ENCODE measurements at regions of chr17 and their contacts with region 1.

Region 1: DNA sequence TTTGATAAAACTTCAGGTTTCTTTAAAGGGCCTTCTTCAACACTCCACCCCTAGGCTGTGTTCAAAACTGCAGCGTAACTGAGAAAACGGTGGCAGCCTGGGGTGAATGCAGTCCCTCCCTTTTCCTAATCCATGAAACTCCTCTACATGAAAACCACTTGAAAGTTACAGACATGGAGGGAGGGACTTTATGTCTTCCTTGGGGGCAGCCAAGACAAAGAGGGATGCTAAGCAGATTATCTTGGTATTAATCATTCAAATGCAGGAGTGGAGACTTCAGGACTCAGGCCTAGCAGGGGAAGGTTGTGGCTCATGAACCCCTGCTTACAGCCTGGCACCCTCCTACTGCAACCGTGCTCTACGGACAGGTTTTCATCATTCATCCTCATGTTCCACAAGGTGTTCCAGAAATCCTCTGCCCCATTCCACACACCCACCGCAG is 46.8 kb downstream of the RNF112 start:
- DNase-seq: peak in 1 of 2 experiments; percentile 49
- H3K4me3 ChIP-seq: peak overlapping the region in 1 of 4 experiments; percentile 23; a peak in 2 of 8 replicates
- H3K27ac ChIP-seq: peak overlapping the region; percentile 30; the same call in 1 of the 2 replicates
- H3K4me1 ChIP-seq: peaks cover 19 to 43% (median 40%) of the 10 kb centered on the region in 4 experiments
- H3K27me3 ChIP-seq: no peaks in the 10 kb centered on the region
- CTCF ChIP-seq: peak in 1 of 3 experiments; percentile 2; a peak in 1 of 4 replicates
- EP300 ChIP-seq: no peak
- POLR2A ChIP-seq: no peak
- RAD21 ChIP-seq: 0 out of 4 replicates have a peak, but pooled peaks of 1 of the 2 experiments have one; percentile 8

Region 2: DNA sequence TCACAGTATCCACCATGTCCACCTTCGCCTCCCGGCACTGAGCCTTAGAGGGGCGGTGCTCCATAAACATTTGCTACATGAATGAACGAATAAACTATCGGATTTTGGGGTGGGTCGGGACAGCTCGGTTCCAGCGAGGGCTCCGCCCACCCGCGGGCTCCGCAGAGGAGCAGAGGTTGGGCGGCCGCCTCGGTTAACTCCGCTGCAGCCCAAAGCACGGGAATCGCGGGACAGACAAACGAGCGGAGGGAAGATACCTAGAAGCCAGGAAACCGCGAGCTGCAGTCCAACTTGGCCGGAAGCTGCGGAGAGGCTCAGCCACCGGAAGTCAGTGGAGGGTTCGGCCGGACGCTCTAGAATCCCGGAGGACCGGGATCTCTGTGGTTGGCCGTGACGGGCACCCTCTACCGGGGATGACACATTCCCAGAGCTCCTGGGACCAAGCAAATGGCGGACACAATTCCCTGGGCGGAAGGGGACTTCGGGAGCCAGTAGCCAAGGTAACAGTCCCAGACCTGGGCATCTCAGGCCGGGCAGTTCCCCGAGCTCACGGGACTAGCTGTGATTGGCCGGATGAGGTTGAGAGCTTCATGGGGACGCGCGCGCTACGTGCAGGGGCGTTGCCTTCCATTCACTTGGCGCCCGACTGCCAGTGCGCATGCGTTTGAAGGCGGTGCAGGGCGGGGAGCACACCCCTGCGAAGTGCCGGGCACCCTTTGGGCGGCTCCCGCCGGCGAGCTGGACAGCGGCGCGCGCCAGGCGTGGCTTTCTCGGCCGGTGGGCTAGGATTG is 80.1 kb before region 1 on chr17:
- CTCF ChIA-PET with region 1: interaction called, 7 read pairs
- POLR2A ChIA-PET with region 1: interaction called, 11 read pairs
- DNase-seq: peak; percentile 94 to 97
- H3K4me3 ChIP-seq: peak overlapping the region; percentile 59 to 90 (median 82)
- H3K27ac ChIP-seq: peak overlapping the region; percentile 79
- H3K4me1 ChIP-seq: peaks cover 3 to 11% (median 5%) of the 10 kb centered on the region in 4 experiments
- H3K27me3 ChIP-seq: no peaks in the 10 kb centered on the region
- CTCF ChIP-seq: no peak
- EP300 ChIP-seq: no peak
- POLR2A ChIP-seq: peak; percentile 38 to 87
- RAD21 ChIP-seq: no peak

Region 3: DNA sequence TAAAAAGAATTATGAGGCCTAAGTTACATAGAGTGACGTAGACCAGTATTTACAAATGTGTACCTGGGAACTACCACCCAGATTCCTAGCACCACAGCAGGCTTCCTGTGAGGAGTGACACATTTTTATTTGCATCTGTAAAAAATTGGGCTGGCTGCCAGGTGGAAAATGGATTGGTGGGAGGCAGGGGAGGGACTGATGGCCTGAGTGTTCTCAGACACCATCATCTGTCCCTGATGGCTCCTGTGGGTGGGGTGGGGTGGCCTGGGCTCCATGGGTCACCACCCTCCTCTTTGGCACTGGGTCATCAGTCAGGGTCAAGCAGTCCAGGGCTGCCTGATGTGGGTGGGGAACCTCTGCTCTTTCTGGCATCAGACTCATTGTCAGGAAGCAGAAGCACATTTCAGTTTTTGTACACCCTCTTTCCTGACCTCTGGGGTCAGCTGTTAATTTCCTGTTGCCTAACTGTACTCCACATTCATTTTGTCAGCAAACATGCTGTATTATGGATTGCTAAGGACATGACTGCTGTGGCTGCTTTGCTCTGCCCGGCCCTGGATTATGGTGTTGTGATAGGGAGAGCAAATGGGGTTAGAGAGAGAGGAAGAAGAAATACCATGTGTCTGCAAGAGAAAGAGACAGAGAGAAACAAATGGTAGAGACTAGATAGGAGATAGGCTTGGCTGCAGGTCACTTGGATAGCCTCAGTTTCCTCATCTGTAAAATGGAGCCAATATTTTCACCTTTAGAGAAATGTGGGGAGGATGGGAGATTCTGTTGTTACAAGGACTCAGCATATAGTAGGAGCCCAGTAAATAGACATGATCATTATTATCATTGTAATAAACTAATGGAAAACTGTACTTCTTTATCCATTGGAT is 59.3 kb before region 1 on chr17:
- CTCF ChIA-PET with region 1: interaction called, 11 read pairs
- POLR2A ChIA-PET with region 1: no interaction called
- DNase-seq: no peak
- H3K4me3 ChIP-seq: no peak overlapping the region
- H3K27ac ChIP-seq: no peak overlapping the region
- H3K4me1 ChIP-seq: peaks cover 2 to 9% (median 5%) of the 10 kb centered on the region in 4 experiments; a peak in 6 of 7 replicates
- H3K27me3 ChIP-seq: no peaks in the 10 kb centered on the region
- CTCF ChIP-seq: no peak
- EP300 ChIP-seq: no peak
- POLR2A ChIP-seq: no peak
- RAD21 ChIP-seq: no peak

Region 4: DNA sequence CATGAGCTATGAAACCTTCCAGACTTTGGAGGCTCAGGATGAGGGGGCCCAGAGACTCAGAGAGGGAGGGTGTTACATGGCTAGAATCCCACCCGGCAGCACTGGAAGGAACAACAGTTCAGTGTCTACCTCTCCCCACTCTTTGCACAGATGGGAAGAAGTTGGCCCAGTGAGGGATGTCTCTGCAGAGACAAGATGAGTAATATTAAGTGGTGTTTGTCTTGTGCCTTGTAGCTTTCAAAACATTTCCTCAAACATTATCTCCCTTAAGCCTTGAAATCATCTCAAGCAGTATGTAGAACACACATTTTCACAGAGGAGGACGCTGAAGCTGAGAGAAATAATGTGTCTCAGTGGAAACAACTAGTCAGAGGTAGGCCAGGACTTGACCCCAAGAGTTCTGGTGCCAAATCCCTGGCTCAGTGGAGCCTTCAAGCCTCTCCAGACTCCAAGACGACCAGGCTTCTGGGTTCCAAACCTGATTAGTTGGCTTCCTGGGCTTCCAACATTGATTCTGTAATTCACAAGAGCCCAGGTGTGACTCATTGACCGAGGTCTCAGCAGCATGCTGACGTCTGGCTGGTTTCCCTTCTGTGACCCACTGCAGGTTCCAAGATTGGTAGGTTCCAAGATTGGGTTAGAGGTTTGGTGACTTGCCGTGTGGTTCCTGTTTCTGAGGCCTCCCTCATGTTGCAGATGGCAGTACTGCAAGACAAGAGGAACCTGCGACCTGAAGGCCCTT is 39.4 kb before region 1 on chr17:
- CTCF ChIA-PET with region 1: no interaction called
- POLR2A ChIA-PET with region 1: no interaction called
- DNase-seq: no peak
- H3K4me3 ChIP-seq: no peak overlapping the region
- H3K27ac ChIP-seq: no peak overlapping the region
- H3K4me1 ChIP-seq: no peaks in the 10 kb centered on the region; a peak in 1 of 7 replicates
- H3K27me3 ChIP-seq: peaks cover 0 to 4% (median under 1%) of the 10 kb centered on the region in 4 experiments; a peak in 2 of 7 replicates
- CTCF ChIP-seq: no peak
- EP300 ChIP-seq: no peak
- POLR2A ChIP-seq: no peak
- RAD21 ChIP-seq: no peak; a peak in 1 of 4 replicates

Region 5: DNA sequence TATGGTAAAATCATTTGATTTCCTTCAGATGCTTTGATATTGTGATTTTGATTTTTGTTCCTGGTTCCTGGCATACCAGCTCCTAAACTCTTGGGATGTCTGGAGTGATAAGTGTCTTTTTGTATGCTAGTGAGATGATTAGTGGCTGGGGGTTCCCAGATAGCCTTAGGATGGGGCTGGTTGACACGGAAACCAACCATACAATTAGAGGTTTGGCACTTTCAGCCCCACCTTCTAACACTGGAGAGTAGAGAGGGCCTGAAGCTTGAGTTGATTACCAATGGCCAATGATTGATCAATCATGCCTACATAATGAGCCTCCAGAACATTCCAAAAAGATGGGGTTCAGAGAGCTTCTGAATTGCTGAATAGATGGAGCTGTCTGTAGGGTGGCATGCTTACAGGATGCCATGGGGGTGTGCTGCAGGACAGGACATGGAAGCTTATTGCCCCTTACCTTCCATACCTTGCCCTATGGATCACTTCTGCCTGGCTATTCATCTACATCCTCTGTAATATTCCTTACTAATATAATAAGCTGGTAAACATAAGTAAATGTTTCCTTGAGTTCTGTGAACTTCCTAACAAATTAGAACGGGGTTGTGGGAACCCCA is 24.0 kb before region 1 on chr17:
- CTCF ChIA-PET with region 1: interaction called, 12 read pairs
- POLR2A ChIA-PET with region 1: no interaction called
- DNase-seq: no peak
- H3K4me3 ChIP-seq: peak overlapping the region in 1 of 4 experiments; percentile 31; a peak in 2 of 8 replicates
- H3K27ac ChIP-seq: no peak overlapping the region
- H3K4me1 ChIP-seq: peaks cover 5 to 16% (median 11%) of the 10 kb centered on the region in 4 experiments
- H3K27me3 ChIP-seq: no peaks in the 10 kb centered on the region
- CTCF ChIP-seq: peak; percentile 56 to 66 (median 58)
- EP300 ChIP-seq: no peak
- POLR2A ChIP-seq: no peak
- RAD21 ChIP-seq: peak; percentile 79 to 83

Region 6: DNA sequence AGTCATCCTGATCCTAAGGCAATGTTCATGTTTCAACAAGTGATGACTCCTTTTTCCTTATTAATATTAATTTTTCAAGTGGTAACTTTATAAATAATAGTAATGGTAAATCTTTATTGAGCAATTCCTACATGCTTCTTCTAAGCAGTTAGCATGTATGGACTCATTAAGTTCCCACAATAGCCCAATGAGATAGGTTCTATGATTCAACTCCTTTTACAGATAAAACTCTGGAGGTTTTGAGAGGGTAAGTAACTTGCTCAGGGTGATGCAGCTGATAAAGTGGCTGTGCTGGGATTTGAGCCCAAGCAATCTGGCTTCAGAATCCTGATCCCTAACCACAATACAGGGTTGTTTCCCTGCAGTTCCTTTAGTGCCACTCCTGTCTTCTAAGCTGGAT is 101.1 kb after region 1 on chr17:
- CTCF ChIA-PET with region 1: no interaction called
- POLR2A ChIA-PET with region 1: no interaction called
- DNase-seq: no peak
- H3K4me3 ChIP-seq: no peak overlapping the region
- H3K27ac ChIP-seq: no peak overlapping the region
- H3K4me1 ChIP-seq: peaks cover 0 to 2% (median 0%) of the 10 kb centered on the region in 4 experiments; a peak in 1 of 7 replicates
- H3K27me3 ChIP-seq: no peaks in the 10 kb centered on the region
- CTCF ChIP-seq: no peak
- EP300 ChIP-seq: no peak
- POLR2A ChIP-seq: no peak
- RAD21 ChIP-seq: no peak